CD8-positive, alpha-beta T cell (primary cell): ENCODE measurements at regions of chr2 and their contacts with region 1.

Region 1: DNA sequence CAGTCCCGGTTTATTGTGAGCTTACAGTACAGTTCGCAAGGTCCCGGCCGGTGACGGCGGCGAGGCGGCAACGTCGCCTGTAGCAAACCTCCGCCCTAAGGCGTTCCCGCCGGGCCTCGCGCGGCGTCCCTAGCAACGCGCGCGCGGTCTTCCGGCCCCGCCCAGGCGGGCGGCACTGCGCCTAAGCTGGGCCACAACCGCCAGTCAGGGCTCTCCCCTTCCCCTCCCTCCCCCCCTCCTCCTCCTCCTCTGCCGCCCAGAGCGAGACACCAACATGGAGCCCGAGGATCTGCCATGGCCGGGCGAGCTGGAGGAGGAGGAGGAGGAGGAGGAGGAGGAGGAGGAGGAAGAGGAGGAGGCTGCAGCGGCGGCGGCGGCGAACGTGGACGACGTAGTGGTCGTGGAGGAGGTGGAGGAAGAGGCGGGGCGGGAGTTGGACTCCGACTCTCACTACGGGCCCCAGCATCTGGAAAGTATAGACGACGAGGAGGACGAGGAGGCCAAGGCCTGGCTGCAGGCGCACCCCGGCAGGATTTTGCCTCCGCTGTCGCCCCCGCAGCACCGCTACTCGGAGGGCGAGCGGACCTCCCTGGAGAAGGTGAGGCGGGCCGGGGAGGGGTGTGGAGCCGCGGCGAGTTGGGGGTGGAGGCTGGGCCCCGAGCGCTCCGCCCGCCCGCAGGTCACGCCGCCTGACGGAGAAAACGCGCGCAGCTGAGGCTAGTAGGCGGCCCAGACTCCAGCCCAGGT is at the start of gene ALMS1:
- DNase-seq: peak; percentile 76 to 96 (median 86)
- ATAC-seq: peak; percentile 88
- H3K4me3 ChIP-seq: peak within 1 kb of the TSS; percentile 75 to 88
- H3K4me3 Mint-ChIP-seq: peak within 1 kb of the TSS; percentile 88
- H3K27ac ChIP-seq: peak within 1 kb of the TSS; percentile 88 to 90
- H3K27ac Mint-ChIP-seq: peak within 1 kb of the TSS; percentile 94
- H3K4me1 ChIP-seq: peaks cover 20% of the 10 kb centered on the region
- H3K4me1 Mint-ChIP-seq: peaks cover 39% of the 10 kb centered on the region
- H3K27me3 ChIP-seq: no peaks in the 10 kb centered on the region
- H3K27me3 Mint-ChIP-seq: peaks cover 2% of the 10 kb centered on the region
- CTCF ChIP-seq: no peak
- total RNA-seq, gene ALMS1: 14.8 to 16.4 TPM

Region 2: GRCh38 chr2:73071360-73072133 is 314.2 kb before region 1 on chr2 and contains the start of gene SFXN5:
- CTCF ChIA-PET with region 1: no interaction called
- POLR2A ChIA-PET with region 1: no interaction called
- intact Hi-C with region 1: loop called (anchors 1 to 2 kb)
- DNase-seq: peak; percentile 89 to 98 (median 95)
- ATAC-seq: peak; percentile 82
- H3K4me3 ChIP-seq: peak within 1 kb of the TSS; percentile 94 to 95
- H3K4me3 Mint-ChIP-seq: peak within 1 kb of the TSS; percentile 96
- H3K27ac ChIP-seq: peak within 1 kb of the TSS; percentile 73 to 86
- H3K27ac Mint-ChIP-seq: peak within 1 kb of the TSS; percentile 92
- H3K4me1 ChIP-seq: peaks cover 13% of the 10 kb centered on the region
- H3K4me1 Mint-ChIP-seq: peaks cover 41% of the 10 kb centered on the region
- H3K27me3 ChIP-seq: no peaks in the 10 kb centered on the region
- H3K27me3 Mint-ChIP-seq: no peaks in the 10 kb centered on the region
- CTCF ChIP-seq: no peak
- total RNA-seq, gene SFXN5: 6.1 to 9.3 TPM

Region 3: DNA sequence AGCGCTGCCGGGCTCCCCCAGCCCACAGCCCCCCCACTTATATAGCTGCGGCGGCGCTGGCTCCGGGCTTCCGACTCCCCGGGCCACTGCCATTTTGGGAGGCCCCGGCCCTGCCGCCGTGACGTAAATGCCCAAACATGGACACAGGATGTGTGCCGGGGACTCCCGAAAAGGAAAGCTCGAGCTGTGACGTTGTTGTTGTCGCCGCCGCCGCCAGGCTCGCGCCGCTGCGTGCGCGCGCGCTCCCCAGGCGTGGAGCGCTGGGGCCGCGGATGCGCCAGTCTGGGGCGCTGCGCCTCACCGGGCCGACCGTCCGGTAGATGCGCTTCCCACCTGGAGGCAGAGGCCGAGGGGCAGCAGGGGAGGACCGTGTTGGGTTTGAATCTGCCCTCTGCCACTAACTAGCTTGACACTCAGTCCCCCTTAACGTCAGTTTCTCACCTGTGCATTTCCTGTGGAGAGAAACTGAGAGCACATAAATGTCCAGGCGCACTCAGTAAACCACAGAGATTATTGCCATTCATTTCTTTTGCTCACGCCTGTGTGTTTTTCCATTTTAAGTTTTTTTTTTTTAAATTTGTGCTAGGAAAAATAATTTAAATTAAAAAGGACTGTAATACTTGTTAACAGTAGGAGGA is 92.1 kb before region 1 on chr2 and contains the start of gene EGR4:
- CTCF ChIA-PET with region 1: no interaction called
- POLR2A ChIA-PET with region 1: interaction called, 4 read pairs
- intact Hi-C with region 1: loop called (anchors 1 to 2 kb)
- DNase-seq: peak; percentile 74 to 96 (median 84)
- ATAC-seq: peak; percentile 92
- H3K4me3 ChIP-seq: peak within 1 kb of the TSS; percentile 51 to 73
- H3K4me3 Mint-ChIP-seq: peak within 1 kb of the TSS; percentile 78
- H3K27ac ChIP-seq: no peak within 1 kb of the TSS
- H3K27ac Mint-ChIP-seq: no peak within 1 kb of the TSS
- H3K4me1 ChIP-seq: peaks cover 26% of the 10 kb centered on the region
- H3K4me1 Mint-ChIP-seq: peaks cover 14% of the 10 kb centered on the region
- H3K27me3 ChIP-seq: peaks cover 35 to 37% of the 10 kb centered on the region in 2 experiments
- H3K27me3 Mint-ChIP-seq: peaks cover 62% of the 10 kb centered on the region
- CTCF ChIP-seq: no peak
- total RNA-seq, gene EGR4: 0.14 to 0.22 TPM

Region 4: DNA sequence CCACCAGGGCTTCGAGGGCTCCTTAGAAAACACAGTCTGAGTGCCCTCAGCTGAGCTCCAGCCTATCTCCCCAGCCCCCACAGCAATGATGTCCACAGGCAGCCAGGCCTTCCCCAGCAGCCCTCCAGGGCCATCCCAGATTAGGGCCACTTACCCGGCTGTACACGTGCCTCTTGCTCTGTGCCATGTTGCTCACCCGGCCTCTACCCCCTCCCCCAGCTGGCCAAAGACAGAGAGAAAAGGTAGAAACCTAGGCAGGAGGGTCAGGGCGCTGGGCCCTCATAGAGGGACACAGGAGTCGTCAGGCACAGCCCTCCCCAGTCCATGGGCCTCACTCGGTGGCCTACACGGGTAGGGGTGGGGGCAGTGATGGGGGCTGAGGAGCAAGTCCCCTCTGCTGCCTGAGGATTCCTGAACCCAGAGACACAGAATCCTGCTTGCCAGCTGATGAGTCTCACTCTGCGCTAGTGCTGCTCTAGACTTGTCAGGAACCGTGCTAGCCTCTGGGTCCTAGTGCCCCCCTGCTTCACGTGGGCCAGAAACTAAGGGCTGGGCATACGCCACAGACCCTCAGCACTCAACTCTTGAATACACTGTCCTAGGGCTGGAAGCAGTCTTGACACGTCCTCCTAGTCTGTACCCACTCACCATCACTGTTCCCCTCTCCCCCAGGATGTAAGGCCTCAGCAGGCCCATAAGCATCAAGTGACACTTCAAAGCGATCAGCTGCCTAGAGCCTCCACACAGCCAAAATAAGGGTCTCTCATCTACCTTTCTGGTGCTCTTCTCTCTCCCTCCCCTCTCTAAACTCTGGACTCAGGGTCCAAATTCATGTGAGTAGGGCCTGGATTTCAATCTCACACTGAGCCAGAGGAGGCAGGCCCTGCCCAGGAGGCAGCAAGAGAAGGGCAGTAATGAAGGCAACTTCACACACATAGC is 994.4 kb after region 1 on chr2 and contains the start of gene DCTN1:
- CTCF ChIA-PET with region 1: no interaction called
- POLR2A ChIA-PET with region 1: no interaction called
- intact Hi-C with region 1: loop called in 1 of 2 experiments (anchors 10 kb)
- DNase-seq: peak in 5 of 9 experiments; percentile 22 to 43 (median 34)
- ATAC-seq: peak; percentile 78
- H3K4me3 ChIP-seq: peak within 1 kb of the TSS; percentile 20 to 35
- H3K4me3 Mint-ChIP-seq: peak within 1 kb of the TSS; percentile 56
- H3K27ac ChIP-seq: no peak within 1 kb of the TSS
- H3K27ac Mint-ChIP-seq: no peak within 1 kb of the TSS
- H3K4me1 ChIP-seq: peaks cover 14% of the 10 kb centered on the region
- H3K4me1 Mint-ChIP-seq: peaks cover 58% of the 10 kb centered on the region
- H3K27me3 ChIP-seq: no peaks in the 10 kb centered on the region
- H3K27me3 Mint-ChIP-seq: no peaks in the 10 kb centered on the region
- CTCF ChIP-seq: no peak
- total RNA-seq, gene DCTN1: 46.1 to 53.7 TPM